ENCODE measurements at regions of chr5 and their contacts with region 1.

Region 1: DNA sequence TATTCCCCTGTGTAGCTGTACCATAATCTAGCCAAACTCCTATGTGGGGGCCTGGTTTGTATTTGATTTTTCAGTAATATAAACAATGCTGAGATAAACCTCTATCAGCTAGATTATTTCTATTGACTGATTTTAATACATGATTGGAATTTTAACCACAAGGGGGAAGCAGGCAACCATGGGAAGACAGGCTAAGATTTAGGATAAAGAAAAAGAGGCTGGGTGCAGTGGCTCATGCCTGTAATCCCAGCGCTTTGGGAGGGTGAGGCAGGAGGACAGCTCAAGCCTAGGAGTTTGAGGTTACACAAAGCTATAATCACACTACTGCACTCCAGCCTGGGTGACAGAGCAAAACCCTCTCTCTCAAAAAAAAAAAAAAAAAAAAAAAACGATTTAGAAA is 18.1 kb upstream of the GPX3 start:
- DNase-seq: no peak
- ATAC-seq: peak in 1 of 2 donors; percentile 10
- H3K4me3 ChIP-seq: no peak overlapping the region
- H3K27ac ChIP-seq: no peak overlapping the region
- H3K4me1 ChIP-seq: peaks cover 11% of the 10 kb centered on the region
- H3K27me3 ChIP-seq: no peaks in the 10 kb centered on the region

Region 2: GRCh38 chr5:151040211-151040747 is 38.0 kb after region 1 on chr5:
- intact Hi-C with region 1: loop called (anchors 5 kb)
- DNase-seq: no peak
- ATAC-seq: peak; percentile 31 to 36
- H3K4me3 ChIP-seq: no peak overlapping the region
- H3K27ac ChIP-seq: peak overlapping the region; percentile 56
- H3K4me1 ChIP-seq: peaks cover 28% of the 10 kb centered on the region
- H3K27me3 ChIP-seq: no peaks in the 10 kb centered on the region

Region 3: GRCh38 chr5:151051066-151051930 is 49.0 kb after region 1 on chr5:
- intact Hi-C with region 1: loop called in 3 of 4 experiments (anchors 5 kb)
- DNase-seq: peak; percentile 84 to 94 (median 91)
- ATAC-seq: peak; percentile 81 to 88
- H3K4me3 ChIP-seq: no peak overlapping the region
- H3K27ac ChIP-seq: no peak overlapping the region
- H3K4me1 ChIP-seq: peaks cover 5% of the 10 kb centered on the region
- H3K27me3 ChIP-seq: no peaks in the 10 kb centered on the region

Region 4: GRCh38 chr5:151110122-151110681 is 108.0 kb after region 1 on chr5:
- intact Hi-C with region 1: loop called (anchors 2 to 5 kb)
- DNase-seq: peak in 1 of 3 donors; percentile 56
- ATAC-seq: peak in 1 of 2 donors; percentile 22
- H3K4me3 ChIP-seq: no peak overlapping the region
- H3K27ac ChIP-seq: peak overlapping the region; percentile 49
- H3K4me1 ChIP-seq: peaks cover 13% of the 10 kb centered on the region
- H3K27me3 ChIP-seq: no peaks in the 10 kb centered on the region

Region 5: GRCh38 chr5:151115274-151115905 is 113.1 kb after region 1 on chr5:
- intact Hi-C with region 1: loop called (anchors 2 to 5 kb)
- DNase-seq: peak; percentile 76 to 91 (median 87)
- ATAC-seq: peak; percentile 61 to 65
- H3K4me3 ChIP-seq: no peak overlapping the region
- H3K27ac ChIP-seq: peak overlapping the region; percentile 6
- H3K4me1 ChIP-seq: no peaks in the 10 kb centered on the region
- H3K27me3 ChIP-seq: no peaks in the 10 kb centered on the region

Measured in right cardiac atrium (tissue), 5 donors.